HEK293T (cell line): ENCODE measurements at regions of chr9 and their contacts with region 1.

Region 1: GRCh38 chr9:35079426-35080341 is at the start of gene FANCG:
- DNase-seq: peak; percentile 87

Region 2: GRCh38 chr9:34929506-34930102 is 150.1 kb before region 1 on chr9:
- CTCF ChIA-PET with region 1: no interaction called
- POLR2A ChIA-PET with region 1: no interaction called
- DNase-seq: peak; percentile 64

Region 3: DNA sequence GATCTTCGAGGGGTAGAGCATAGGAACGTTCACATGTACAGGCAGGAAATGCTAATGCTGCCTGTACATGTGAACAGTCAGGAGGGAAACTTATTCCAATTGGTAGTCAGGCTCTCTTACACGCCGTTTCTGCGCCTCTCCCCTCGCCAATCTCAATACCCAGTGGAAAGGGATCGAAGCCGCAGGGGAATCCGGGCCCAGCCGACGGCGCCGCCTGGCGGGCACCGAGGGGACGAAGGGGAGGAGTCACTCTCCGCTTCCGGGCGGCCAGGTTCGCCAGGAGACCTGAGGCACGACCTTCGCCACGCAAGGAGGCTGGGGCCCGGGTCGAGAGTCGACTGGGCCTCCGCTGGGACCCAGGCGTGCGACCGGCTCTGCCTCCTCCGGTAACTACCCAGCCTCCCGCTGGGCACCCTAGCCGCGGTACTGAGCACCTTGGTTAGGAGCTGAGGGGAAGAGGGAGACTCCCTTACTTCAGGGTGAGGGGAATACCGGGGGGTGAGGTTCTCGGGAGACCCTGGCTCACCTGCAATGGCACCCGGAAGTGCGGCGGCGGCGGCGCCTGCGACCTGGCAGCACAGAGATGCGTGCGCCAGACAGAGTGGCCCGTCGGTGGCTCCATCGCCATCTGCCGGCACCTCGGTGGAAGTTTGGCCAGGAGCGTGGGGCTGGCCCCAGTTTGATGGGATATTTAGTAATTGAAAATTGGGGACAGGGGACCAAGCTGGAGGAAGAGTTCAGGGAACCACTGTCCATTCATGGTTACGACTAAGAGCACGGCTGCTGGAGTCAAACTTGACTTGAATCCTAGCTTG is 16.6 kb after region 1 on chr9 and contains the start of gene PIGO:
- CTCF ChIA-PET with region 1: interaction called, 4 read pairs
- POLR2A ChIA-PET with region 1: interaction called, 17 read pairs
- DNase-seq: peak; percentile 86

Region 4: GRCh38 chr9:35102926-35103659 is 23.4 kb after region 1 on chr9 and contains the start of gene STOML2:
- CTCF ChIA-PET with region 1: no interaction called
- POLR2A ChIA-PET with region 1: interaction called, 18 read pairs
- DNase-seq: peak; percentile 92